Mammary epithelial cell (primary cell): ENCODE measurements at regions of chr9 and their contacts with region 1.

Region 1: DNA sequence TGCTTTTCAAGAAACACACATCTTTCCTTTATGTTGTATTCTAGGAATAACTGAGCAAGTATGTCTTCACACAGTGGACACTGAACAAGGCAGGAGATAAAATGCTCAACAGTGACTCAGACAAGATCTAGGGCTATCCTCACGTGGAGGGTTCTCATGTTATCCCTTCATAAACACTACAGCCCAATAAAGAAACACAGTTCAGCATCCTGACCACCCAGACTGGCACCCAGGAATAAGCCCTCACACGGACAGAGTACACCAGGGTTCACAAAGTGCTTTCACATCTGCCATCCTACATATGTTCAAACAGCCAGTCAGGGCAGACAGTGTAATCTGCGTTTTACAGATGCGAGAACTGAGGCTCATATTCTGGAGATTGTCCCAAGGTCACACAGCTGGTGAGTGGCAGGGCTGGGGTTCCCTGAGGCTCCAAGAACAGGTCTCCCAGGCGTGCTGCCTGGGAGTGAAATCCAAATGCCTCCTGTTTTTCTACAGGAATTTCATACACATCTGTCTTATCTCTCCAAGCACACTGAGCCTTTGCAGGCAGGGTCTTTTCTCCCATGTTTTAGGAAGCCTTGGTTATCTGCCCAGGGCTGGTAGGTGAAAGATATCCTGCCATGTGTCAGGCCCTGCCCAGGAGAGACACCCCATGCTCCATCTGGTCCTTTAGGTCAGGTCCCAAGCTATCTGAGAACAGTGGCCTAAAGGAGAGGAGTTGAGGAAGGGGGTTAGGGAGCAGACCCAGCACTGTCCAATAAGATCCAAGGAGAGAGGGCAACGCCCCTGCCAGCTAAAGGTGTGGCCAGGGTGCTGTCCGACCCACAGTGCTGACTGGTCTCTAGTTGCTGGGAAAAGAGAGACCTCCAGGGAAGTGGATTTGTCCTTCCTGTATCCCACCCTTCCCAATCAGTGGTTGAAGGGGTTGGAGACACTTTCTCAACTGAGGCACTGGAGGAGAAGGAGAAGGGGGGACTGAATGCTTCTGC is 47.9 kb upstream of the XPA start:
- DNase-seq: no peak
- H3K4me3 ChIP-seq: no peak overlapping the region
- H3K27ac ChIP-seq: no peak overlapping the region
- H3K4me1 ChIP-seq: peaks cover 11% of the 10 kb centered on the region
- H3K27me3 ChIP-seq: peaks cover 4% of the 10 kb centered on the region
- CTCF ChIP-seq: no peak

Region 2: DNA sequence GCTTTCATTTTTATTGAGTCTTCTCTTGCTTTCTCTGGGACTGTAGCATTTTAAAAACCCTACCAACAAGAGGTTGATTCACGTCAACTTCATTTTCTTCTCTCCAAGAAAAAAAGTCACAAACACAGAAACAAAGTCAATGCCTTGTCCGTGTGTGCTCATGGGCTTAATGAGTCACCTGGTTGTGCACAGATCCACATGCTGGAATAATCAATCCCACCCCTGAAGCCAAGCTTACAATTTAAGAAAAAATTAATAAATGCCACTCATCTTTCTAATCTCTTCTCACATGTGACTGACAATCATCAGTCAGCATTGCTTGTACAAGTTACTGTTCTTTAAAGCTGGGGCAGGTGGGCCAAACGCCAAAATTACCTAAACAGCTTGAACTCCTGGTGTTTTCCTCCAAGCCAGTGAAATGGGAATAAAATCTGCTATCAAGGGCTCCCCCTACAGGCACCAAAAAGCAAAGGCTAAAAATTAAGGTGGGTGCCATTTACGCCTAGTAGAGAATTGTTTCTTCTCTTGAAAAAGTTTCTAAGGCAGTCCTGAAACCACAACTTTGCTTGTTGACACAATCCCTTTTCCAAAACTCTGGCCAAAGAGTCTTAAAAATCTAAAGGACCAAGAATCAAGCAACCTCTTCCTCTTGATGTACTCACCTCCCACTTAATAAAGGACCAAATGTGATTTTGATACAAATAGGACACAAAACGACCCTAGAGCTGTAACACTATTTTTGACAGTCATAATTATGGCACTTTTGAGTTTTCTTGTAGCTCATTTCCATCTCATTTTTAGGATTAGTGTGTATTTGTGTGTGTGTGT is 155.9 kb after region 1 on chr9:
- CTCF ChIA-PET with region 1: no interaction called
- dilution Hi-C with region 1: no loop called
- in situ Hi-C with region 1: no loop called
- intact Hi-C with region 1: loop called (anchors 2 kb)
- DNase-seq: peak; percentile 36
- H3K4me3 ChIP-seq: no peak overlapping the region
- H3K27ac ChIP-seq: no peak overlapping the region
- H3K4me1 ChIP-seq: peaks cover 6% of the 10 kb centered on the region
- H3K27me3 ChIP-seq: no peaks in the 10 kb centered on the region
- CTCF ChIP-seq: peak; percentile 79 to 80